Activated T-helper 2 cell treated with anti-CD3 and anti-CD28 coated beads, Interferon-gamma antibody, Interleukin-2, Interleukin-4, amounts not matched to agents 10 μg/mL and 5 μg/mL and 100 μg/mL, durations not matched to agents 14 hours and 24 hours and 36 hours (primary cell): ENCODE measurements at regions of chr19 and their contacts with region 1.

Region 1: DNA sequence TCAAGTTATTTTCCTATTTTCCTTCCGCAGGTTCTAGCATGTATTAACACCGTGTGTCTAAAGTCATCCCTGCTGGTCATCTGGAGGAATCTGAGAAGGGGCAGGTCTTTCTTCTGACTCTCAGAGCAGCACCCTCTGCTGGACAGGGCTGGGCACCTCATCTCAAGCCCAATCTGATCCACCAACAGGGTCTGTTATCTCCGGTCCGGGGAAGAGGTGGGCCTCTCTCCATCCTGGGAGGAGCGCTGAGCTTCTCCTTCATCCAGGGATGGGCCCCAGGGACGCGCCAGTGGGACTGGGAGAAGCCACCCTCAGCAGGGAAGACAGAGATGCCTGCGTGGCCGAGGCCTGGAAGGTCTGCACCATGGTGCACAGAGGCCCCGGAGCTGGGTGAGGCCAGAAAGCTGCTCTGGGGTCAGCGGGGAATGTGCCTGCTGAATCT is 26.0 kb upstream of the ZNF331 start:
- DNase-seq: no peak
- H3K4me3 Mint-ChIP-seq: no peak overlapping the region
- H3K27ac Mint-ChIP-seq: no peak overlapping the region
- H3K4me1 Mint-ChIP-seq: no peaks in the 10 kb centered on the region
- H3K27me3 Mint-ChIP-seq: no peaks in the 10 kb centered on the region

Region 2: DNA sequence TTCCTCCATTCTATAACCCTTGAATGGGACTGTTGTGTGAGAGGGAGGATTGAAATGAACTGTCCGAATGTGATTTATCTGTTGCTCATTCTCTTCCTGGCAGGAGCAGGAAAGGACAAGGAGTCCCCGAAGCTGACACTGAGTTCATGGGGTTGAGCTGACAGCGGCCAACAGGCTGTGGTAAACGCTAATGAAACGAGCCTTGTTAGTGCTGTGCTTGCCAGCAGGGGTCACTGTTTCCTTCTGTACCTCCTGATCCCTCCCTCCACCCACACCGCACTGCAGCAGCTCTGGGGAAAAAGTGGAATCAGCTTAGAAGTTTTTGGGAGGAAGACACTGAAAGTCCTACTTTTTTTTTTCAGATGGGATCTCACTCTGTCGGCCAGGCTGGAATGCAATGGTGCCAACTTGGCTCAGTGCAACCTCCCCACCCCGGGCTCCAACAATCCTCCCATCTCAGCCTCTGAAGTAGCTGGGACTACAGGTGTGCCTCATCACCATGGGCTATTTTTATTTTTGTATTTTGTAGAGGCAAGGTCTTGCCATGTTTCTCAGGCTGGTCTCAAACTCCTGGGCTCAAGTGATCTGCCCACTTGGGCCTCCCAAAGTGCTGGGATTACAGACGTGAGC is 86.9 kb before region 1 on chr19:
- intact Hi-C with region 1: loop called (anchors 5 kb)
- DNase-seq: peak; percentile 40
- H3K4me3 Mint-ChIP-seq: no peak overlapping the region
- H3K27ac Mint-ChIP-seq: no peak overlapping the region
- H3K4me1 Mint-ChIP-seq: no peaks in the 10 kb centered on the region
- H3K27me3 Mint-ChIP-seq: no peaks in the 10 kb centered on the region